ENCODE measurements at regions of chr6 and their contacts with region 1.

Region 1: GRCh38 chr6:113464959-113465358 is 392.2 kb upstream of the MARCKS start:
- DNase-seq: no peak
- H3K4me3 ChIP-seq: no peak overlapping the region
- H3K27ac ChIP-seq: no peak overlapping the region
- H3K4me1 ChIP-seq: no peaks in the 10 kb centered on the region
- H3K27me3 ChIP-seq: no peaks in the 10 kb centered on the region
- CTCF ChIP-seq: no peak
- POLR2A ChIP-seq: no peak

Region 2: GRCh38 chr6:113313841-113314240 is 151.1 kb before region 1 on chr6:
- intact Hi-C with region 1: loop called (anchors 5 kb)
- DNase-seq: no peak
- H3K4me3 ChIP-seq: no peak overlapping the region
- H3K27ac ChIP-seq: no peak overlapping the region
- H3K4me1 ChIP-seq: no peaks in the 10 kb centered on the region
- H3K27me3 ChIP-seq: no peaks in the 10 kb centered on the region
- CTCF ChIP-seq: no peak
- POLR2A ChIP-seq: no peak